ENCODE measurements at regions of chr18 and their contacts with region 1.

Region 1: GRCh38 chr18:45839414-45840395 is 14.2 kb downstream of the SIGLEC15 start:
- H3K4me3 Mint-ChIP-seq: no peak overlapping the region
- H3K27ac Mint-ChIP-seq: no peak overlapping the region
- H3K4me1 Mint-ChIP-seq: peaks cover 32% of the 10 kb centered on the region
- H3K27me3 Mint-ChIP-seq: peaks cover 27% of the 10 kb centered on the region

Region 2: GRCh38 chr18:45722899-45723298 is 116.8 kb before region 1 on chr18:
- intact Hi-C with region 1: loop called (anchors 2 kb)
- H3K4me3 Mint-ChIP-seq: no peak overlapping the region
- H3K27ac Mint-ChIP-seq: no peak overlapping the region
- H3K4me1 Mint-ChIP-seq: no peaks in the 10 kb centered on the region
- H3K27me3 Mint-ChIP-seq: peaks cover 1% of the 10 kb centered on the region

Region 3: GRCh38 chr18:45749918-45750689 is 89.6 kb before region 1 on chr18:
- intact Hi-C with region 1: loop called (anchors 1 kb)
- H3K4me3 Mint-ChIP-seq: no peak overlapping the region
- H3K27ac Mint-ChIP-seq: no peak overlapping the region
- H3K4me1 Mint-ChIP-seq: peaks cover 18% of the 10 kb centered on the region
- H3K27me3 Mint-ChIP-seq: no peaks in the 10 kb centered on the region

Region 4: DNA sequence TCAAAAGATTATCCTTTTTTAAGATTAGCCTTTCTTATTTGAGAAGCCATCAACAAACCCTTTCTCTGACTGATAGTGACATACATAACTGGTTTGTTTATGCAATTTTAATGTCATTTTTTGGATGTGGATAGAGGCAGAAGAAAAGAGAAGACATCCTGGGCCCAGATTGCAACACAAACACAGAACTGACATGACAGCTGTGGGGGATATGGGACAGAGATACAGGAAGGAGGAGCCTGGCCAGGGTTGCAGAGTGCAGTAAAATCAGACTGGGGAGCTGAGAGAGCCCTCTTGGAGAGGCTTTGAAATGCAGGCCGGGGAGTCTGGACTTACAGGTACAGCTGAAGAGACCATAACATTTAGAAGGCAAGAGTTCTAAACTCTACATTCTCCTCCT is 50.9 kb after region 1 on chr18:
- intact Hi-C with region 1: no loop called
- H3K4me3 Mint-ChIP-seq: no peak overlapping the region
- H3K27ac Mint-ChIP-seq: peak overlapping the region; percentile 60
- H3K4me1 Mint-ChIP-seq: peaks cover 19% of the 10 kb centered on the region
- H3K27me3 Mint-ChIP-seq: no peaks in the 10 kb centered on the region

Region 5: GRCh38 chr18:46133534-46133933 is 293.8 kb after region 1 on chr18:
- intact Hi-C with region 1: no loop called
- H3K4me3 Mint-ChIP-seq: no peak overlapping the region
- H3K27ac Mint-ChIP-seq: no peak overlapping the region
- H3K4me1 Mint-ChIP-seq: no peaks in the 10 kb centered on the region
- H3K27me3 Mint-ChIP-seq: no peaks in the 10 kb centered on the region